Transverse colon (tissue), 4 donors: ENCODE measurements at regions of chr16 and their contacts with region 1.

Region 1: GRCh38 chr16:59552164-59552563 is 818.0 kb upstream of the GOT2 start:
- DNase-seq: no peak
- H3K4me3 ChIP-seq: no peak overlapping the region
- H3K27ac ChIP-seq: no peak overlapping the region
- H3K4me1 ChIP-seq: no peaks in the 10 kb centered on the region
- H3K27me3 ChIP-seq: no peaks in the 10 kb centered on the region
- CTCF ChIP-seq: no peak
- EP300 ChIP-seq: no peak
- POLR2A ChIP-seq: no peak

Region 2: GRCh38 chr16:61277840-61278239 is 1725.7 kb after region 1 on chr16:
- in situ Hi-C with region 1: no loop called
- intact Hi-C with region 1: loop called (anchors 10 kb)
- DNase-seq: no peak
- H3K4me3 ChIP-seq: no peak overlapping the region
- H3K27ac ChIP-seq: no peak overlapping the region
- H3K4me1 ChIP-seq: no peaks in the 10 kb centered on the region
- H3K27me3 ChIP-seq: no peaks in the 10 kb centered on the region
- CTCF ChIP-seq: no peak
- EP300 ChIP-seq: no peak
- POLR2A ChIP-seq: no peak